Heart right ventricle (tissue), 16 donors: ENCODE measurements at regions of chr10 and their contacts with region 1.

Region 1: GRCh38 chr10:4767033-4767814 is 58.8 kb upstream of the AKR1E2 start:
- DNase-seq: peak in 1 of 2 donors; percentile 30
- ATAC-seq: peak in 6 of 8 donors; percentile 40 to 72 (median 66)
- H3K4me3 ChIP-seq: no peak overlapping the region
- H3K27ac ChIP-seq: peak overlapping the region in 9 of 10 donors; percentile 4 to 75 (median 39)
- H3K4me1 ChIP-seq: peaks cover 5 to 64% (median 38%) of the 10 kb centered on the region in 9 donors
- H3K27me3 ChIP-seq: no peaks in the 10 kb centered on the region
- CTCF ChIP-seq: peak; percentile 51 to 92 (median 82)

Region 2: GRCh38 chr10:3248888-3249758 is 1518.1 kb before region 1 on chr10:
- intact Hi-C with region 1: loop called in 1 of 10 experiments (anchors 10 kb)
- DNase-seq: no peak
- ATAC-seq: peak in 6 of 8 donors; percentile 49 to 86 (median 70)
- H3K4me3 ChIP-seq: no peak overlapping the region
- H3K27ac ChIP-seq: peak overlapping the region in 8 of 10 donors; percentile 23 to 76 (median 54)
- H3K4me1 ChIP-seq: peaks cover 0 to 13% (median 0%) of the 10 kb centered on the region in 9 donors
- H3K27me3 ChIP-seq: peaks cover 0 to 3% (median 0%) of the 10 kb centered on the region in 7 donors
- CTCF ChIP-seq: no peak

Region 3: DNA sequence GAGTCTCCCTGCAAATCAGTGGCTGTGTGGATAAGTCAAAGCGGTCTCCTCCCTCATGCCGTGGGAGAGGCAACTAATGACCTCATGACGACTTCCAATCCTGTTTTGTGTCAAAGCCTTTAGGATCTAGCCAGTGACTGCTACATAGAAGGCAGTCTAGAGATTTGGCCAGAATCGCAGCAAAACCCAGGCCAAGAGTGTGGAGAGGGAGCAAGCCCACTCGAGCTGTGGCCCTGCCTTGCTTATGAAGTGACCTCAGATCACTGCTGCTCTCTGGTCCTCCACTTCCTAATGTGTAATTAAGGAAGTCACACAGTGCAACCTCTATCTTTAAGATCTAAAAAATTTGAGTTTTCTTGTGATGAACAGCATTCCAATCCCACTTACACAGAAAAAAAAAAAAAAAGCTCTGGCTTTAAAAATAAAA is 685.5 kb before region 1 on chr10:
- intact Hi-C with region 1: loop called in 1 of 10 experiments (anchors 5 kb)
- DNase-seq: peak in 1 of 2 donors; percentile 43
- ATAC-seq: peak in 7 of 8 donors; percentile 29 to 75 (median 64)
- H3K4me3 ChIP-seq: no peak overlapping the region
- H3K27ac ChIP-seq: peak overlapping the region in 8 of 10 donors; percentile 47 to 87 (median 64)
- H3K4me1 ChIP-seq: peaks cover 4 to 62% (median 51%) of the 10 kb centered on the region in 9 donors
- H3K27me3 ChIP-seq: no peaks in the 10 kb centered on the region
- CTCF ChIP-seq: no peak

Region 4: GRCh38 chr10:4372601-4373000 is 394.6 kb before region 1 on chr10:
- intact Hi-C with region 1: loop called in 1 of 10 experiments (anchors 10 kb)
- DNase-seq: peak in 1 of 2 donors; percentile 39
- ATAC-seq: peak; percentile 71 to 97 (median 96)
- H3K4me3 ChIP-seq: no peak overlapping the region
- H3K27ac ChIP-seq: peak overlapping the region in 9 of 10 donors; percentile 42 to 72 (median 60)
- H3K4me1 ChIP-seq: peaks cover 0 to 27% (median 11%) of the 10 kb centered on the region in 9 donors
- H3K27me3 ChIP-seq: no peaks in the 10 kb centered on the region
- CTCF ChIP-seq: no peak

Region 5: GRCh38 chr10:4656576-4657182 is 110.5 kb before region 1 on chr10:
- intact Hi-C with region 1: loop called in 6 of 10 experiments (anchors 5 kb)
- DNase-seq: peak; percentile 33 to 70
- ATAC-seq: peak in 6 of 8 donors; percentile 50 to 72 (median 64)
- H3K4me3 ChIP-seq: no peak overlapping the region
- H3K27ac ChIP-seq: no peak overlapping the region
- H3K4me1 ChIP-seq: peaks cover 0 to 34% (median 10%) of the 10 kb centered on the region in 9 donors
- H3K27me3 ChIP-seq: no peaks in the 10 kb centered on the region
- CTCF ChIP-seq: peak; percentile 79 to 95 (median 93)

Region 6: DNA sequence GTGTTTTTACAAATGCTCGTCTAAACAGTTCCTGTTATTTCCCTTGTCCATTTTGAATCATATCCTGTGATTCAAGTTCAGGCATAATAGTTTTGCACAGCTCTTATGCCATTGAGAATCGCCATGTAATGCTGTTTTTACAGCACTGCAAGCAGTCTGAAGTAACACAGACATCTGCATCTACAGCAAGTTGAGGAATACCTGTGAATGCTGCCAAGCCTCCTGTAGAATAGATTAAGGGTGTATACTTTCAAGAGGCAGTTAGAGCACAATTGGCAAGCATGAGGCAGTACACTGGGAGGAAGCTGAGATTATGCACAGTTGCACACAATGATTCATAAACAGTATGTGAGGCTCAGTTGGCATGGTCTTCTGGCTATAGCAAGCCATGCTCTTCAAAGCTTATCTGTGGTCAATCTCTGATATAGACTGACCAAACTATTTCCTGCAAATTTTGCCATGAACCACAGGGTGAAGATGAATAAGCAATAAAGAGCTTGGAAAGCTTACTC is 63.1 kb before region 1 on chr10:
- intact Hi-C with region 1: loop called in 1 of 10 experiments (anchors 5 kb)
- DNase-seq: peak in 1 of 2 donors; percentile 61
- ATAC-seq: peak; percentile 80 to 97 (median 92)
- H3K4me3 ChIP-seq: no peak overlapping the region
- H3K27ac ChIP-seq: peak overlapping the region in 9 of 10 donors; percentile 28 to 78 (median 72)
- H3K4me1 ChIP-seq: peaks cover 0 to 30% (median 16%) of the 10 kb centered on the region in 9 donors
- H3K27me3 ChIP-seq: peaks cover 0 to 4% (median 0%) of the 10 kb centered on the region in 7 donors
- CTCF ChIP-seq: no peak